AG04449 (cell line): ENCODE measurements at regions of chr2 and their contacts with region 1.

Region 1: GRCh38 chr2:192162392-192163042 is 32.2 kb downstream of the TMEFF2 start:
- DNase-seq: no peak
- H3K4me3 ChIP-seq: no peak overlapping the region
- CTCF ChIP-seq: peak; percentile 72

Region 2: DNA sequence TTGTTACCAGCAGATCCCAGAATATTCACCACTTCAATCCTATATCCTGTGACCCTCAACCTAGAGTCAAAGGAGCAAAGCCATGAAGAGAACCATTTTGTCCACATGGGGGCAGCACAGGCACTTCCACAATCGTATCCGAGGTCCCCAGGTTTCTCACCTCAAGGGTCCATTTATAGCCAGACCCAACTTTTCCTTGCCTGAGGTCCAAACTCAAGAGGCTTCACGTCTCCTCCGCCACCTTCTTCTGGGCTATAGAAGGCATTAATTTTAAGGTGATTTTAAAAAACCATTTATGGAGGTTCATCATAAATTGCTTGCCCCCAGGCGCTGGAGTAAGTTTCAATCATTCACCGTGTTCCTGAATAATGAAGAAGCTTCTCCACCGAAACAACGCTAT is 596.2 kb before region 1 on chr2:
- CTCF ChIA-PET with region 1: interaction called, 31 read pairs
- POLR2A ChIA-PET with region 1: no interaction called
- DNase-seq: no peak
- H3K4me3 ChIP-seq: no peak overlapping the region
- CTCF ChIP-seq: peak; percentile 81

Region 3: GRCh38 chr2:191811807-191812602 is 350.5 kb before region 1 on chr2:
- CTCF ChIA-PET with region 1: interaction called, 601 read pairs
- POLR2A ChIA-PET with region 1: interaction called, 5 read pairs
- DNase-seq: no peak
- H3K4me3 ChIP-seq: no peak overlapping the region
- CTCF ChIP-seq: peak; percentile 76

Region 4: GRCh38 chr2:191848771-191849726 is 313.5 kb before region 1 on chr2:
- CTCF ChIA-PET with region 1: interaction called, 11 read pairs
- POLR2A ChIA-PET with region 1: no interaction called
- DNase-seq: no peak
- H3K4me3 ChIP-seq: no peak overlapping the region
- CTCF ChIP-seq: no peak

Region 5: DNA sequence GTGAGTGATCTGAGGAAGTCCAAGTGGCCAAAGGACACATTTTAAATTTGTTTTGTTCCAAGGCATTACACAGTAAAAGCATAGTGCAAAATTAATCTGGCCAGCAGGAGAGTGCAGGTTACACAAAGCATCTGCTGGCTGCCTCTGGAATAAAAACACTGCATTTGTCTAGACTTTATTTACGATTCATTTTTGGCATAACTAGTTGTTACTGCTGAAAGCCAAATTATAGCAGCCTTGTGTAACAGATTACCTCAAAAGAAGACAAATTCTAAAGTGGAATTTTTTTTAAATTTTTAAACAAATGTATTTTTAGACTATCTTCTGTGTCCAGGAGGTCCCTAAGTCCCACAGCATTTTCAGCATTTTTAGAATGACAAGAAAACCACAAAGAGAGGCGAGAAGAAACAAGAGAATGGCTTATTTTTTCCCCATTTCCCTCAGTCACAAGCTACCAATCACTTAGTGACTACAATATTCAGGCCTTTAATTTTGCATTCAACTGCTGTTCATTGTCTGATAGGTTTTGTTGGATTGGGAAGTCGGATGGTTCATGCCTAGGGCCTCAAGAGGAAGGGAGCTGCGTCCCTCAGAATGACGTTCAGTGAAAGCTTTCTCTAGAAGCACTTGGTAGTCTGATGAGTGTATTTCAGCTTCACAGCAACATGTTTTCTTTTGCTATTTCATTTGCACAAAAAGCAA is 13.7 kb before region 1 on chr2:
- CTCF ChIA-PET with region 1: interaction called, 17 read pairs
- POLR2A ChIA-PET with region 1: no interaction called
- DNase-seq: no peak
- H3K4me3 ChIP-seq: no peak overlapping the region
- CTCF ChIP-seq: peak; percentile 7